ENCODE measurements at regions of chr2 and their contacts with region 1.

Region 1: DNA sequence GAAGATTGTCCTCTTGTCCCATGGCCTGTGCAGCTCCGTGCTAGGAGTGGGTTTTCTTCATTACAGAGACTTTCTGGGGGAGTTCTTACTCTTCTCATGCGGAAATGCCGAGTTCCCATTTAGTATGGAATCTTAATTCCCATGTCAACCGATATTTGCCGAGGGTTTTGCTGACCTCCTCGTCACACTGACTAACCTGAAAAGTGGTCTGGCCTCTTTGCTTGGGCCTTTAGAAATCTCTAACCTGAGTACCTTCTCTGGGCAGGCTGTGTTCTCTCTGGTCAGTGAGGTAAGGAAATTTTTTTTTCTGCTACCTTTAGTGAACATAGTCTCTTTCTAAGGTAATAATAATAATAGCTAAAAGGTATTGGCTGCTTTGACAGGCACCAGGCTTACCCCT is 10.9 kb upstream of the EML6 start:
- DNase-seq: no peak
- H3K4me3 ChIP-seq: no peak overlapping the region
- H3K27ac ChIP-seq: no peak overlapping the region
- H3K4me1 ChIP-seq: peaks cover 0 to 14% (median 12%) of the 10 kb centered on the region in 4 donors
- H3K27me3 ChIP-seq: peaks cover 0 to 13% (median 0%) of the 10 kb centered on the region in 4 donors
- CTCF ChIP-seq: no peak
- EP300 ChIP-seq: no peak
- POLR2A ChIP-seq: no peak

Region 2: GRCh38 chr2:54295911-54296310 is 416.6 kb before region 1 on chr2:
- intact Hi-C with region 1: no loop called
- DNase-seq: no peak
- H3K4me3 ChIP-seq: no peak overlapping the region
- H3K27ac ChIP-seq: no peak overlapping the region
- H3K4me1 ChIP-seq: no peaks in the 10 kb centered on the region
- H3K27me3 ChIP-seq: no peaks in the 10 kb centered on the region
- CTCF ChIP-seq: no peak
- EP300 ChIP-seq: no peak
- POLR2A ChIP-seq: no peak

Region 3: DNA sequence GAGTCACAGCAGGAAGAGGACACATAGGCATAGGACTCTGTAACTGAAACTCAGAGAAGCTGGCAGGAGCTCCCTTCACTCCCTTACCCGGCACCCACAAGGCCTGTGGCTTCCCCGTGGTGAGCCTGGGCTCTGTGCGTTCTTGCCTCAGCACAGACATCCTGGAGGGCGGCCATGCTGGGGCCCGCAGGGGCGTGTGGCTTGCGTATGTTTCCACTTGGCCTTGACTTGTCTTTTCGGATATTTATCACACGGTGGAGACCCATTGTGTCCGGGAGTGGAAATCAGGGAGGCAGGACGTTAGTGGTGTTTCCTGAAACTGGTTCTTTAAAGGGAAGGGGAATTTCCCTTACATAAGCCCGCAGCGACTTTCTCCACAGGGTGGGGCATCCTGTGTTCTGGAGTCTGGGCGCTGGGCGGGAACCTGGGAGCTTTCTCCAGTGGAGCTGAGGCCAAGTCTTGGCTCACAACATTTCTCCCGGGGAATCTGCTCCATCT is 39.0 kb before region 1 on chr2:
- intact Hi-C with region 1: loop called (anchors 1 kb)
- DNase-seq: peak; percentile 92
- H3K4me3 ChIP-seq: peak overlapping the region; percentile 16 to 19 (median 18)
- H3K27ac ChIP-seq: peak overlapping the region; percentile 79 to 87 (median 84)
- H3K4me1 ChIP-seq: peaks cover 64 to 76% (median 74%) of the 10 kb centered on the region in 4 donors
- H3K27me3 ChIP-seq: no peaks in the 10 kb centered on the region
- CTCF ChIP-seq: no peak
- EP300 ChIP-seq: peak; percentile 3
- POLR2A ChIP-seq: no peak

Measured in esophagus muscularis mucosa (tissue), 4 donors.